CD4-positive, alpha-beta T cell (primary cell): ENCODE measurements at regions of chr14 and their contacts with region 1.

Region 1: GRCh38 chr14:104752735-104753531 is at the start of gene SIVA1:
- DNase-seq: peak; percentile 99 to 100 (median 99)
- ATAC-seq: peak; percentile 88
- H3K4me3 ChIP-seq: peak within 1 kb of the TSS; percentile 93
- H3K4me3 Mint-ChIP-seq: peak within 1 kb of the TSS; percentile 96
- H3K27ac ChIP-seq: peak within 1 kb of the TSS; percentile 60 to 83
- H3K27ac Mint-ChIP-seq: peak within 1 kb of the TSS; percentile 97
- H3K4me1 ChIP-seq: peaks cover 41% of the 10 kb centered on the region
- H3K4me1 Mint-ChIP-seq: peaks cover 37% of the 10 kb centered on the region
- H3K27me3 ChIP-seq: no peaks in the 10 kb centered on the region
- H3K27me3 Mint-ChIP-seq: no peaks in the 10 kb centered on the region
- CTCF ChIP-seq: no peak
- total RNA-seq, gene SIVA1: 111 to 124 TPM

Region 2: GRCh38 chr14:103715052-103716000 is 1037.6 kb before region 1 on chr14 and contains the starts of genes XRCC3 and ZFYVE21:
- CTCF ChIA-PET with region 1: no interaction called
- POLR2A ChIA-PET with region 1: no interaction called
- intact Hi-C with region 1: loop called in 1 of 2 experiments (anchors 10 kb)
- DNase-seq: peak; percentile 99 to 100 (median 99)
- ATAC-seq: peak; percentile 93
- H3K4me3 ChIP-seq: peak within 1 kb of the TSS; percentile 51
- H3K4me3 Mint-ChIP-seq: peak within 1 kb of the TSS; percentile 94
- H3K27ac ChIP-seq: no peak within 1 kb of the TSS
- H3K27ac Mint-ChIP-seq: peak within 1 kb of the TSS; percentile 84
- H3K4me1 ChIP-seq: peaks cover 39% of the 10 kb centered on the region
- H3K4me1 Mint-ChIP-seq: peaks cover 43% of the 10 kb centered on the region
- H3K27me3 ChIP-seq: no peaks in the 10 kb centered on the region
- H3K27me3 Mint-ChIP-seq: no peaks in the 10 kb centered on the region
- CTCF ChIP-seq: no peak
- total RNA-seq, gene XRCC3: 4.6 to 4.8 TPM
- total RNA-seq, gene ZFYVE21: 2.6 to 3.0 TPM

Region 3: GRCh38 chr14:104665657-104666522 is 87.0 kb before region 1 on chr14:
- CTCF ChIA-PET with region 1: no interaction called
- POLR2A ChIA-PET with region 1: interaction called, 10 read pairs
- intact Hi-C with region 1: no loop called
- DNase-seq: peak; percentile 28 to 78 (median 50)
- ATAC-seq: peak; percentile 93
- H3K4me3 ChIP-seq: no peak overlapping the region
- H3K4me3 Mint-ChIP-seq: peak overlapping the region; percentile 25
- H3K27ac ChIP-seq: no peak overlapping the region
- H3K27ac Mint-ChIP-seq: peak overlapping the region; percentile 63
- H3K4me1 ChIP-seq: peaks cover 30% of the 10 kb centered on the region
- H3K4me1 Mint-ChIP-seq: peaks cover 32% of the 10 kb centered on the region
- H3K27me3 ChIP-seq: no peaks in the 10 kb centered on the region
- H3K27me3 Mint-ChIP-seq: peaks cover 6% of the 10 kb centered on the region
- CTCF ChIP-seq: peak; percentile 69

Region 4: DNA sequence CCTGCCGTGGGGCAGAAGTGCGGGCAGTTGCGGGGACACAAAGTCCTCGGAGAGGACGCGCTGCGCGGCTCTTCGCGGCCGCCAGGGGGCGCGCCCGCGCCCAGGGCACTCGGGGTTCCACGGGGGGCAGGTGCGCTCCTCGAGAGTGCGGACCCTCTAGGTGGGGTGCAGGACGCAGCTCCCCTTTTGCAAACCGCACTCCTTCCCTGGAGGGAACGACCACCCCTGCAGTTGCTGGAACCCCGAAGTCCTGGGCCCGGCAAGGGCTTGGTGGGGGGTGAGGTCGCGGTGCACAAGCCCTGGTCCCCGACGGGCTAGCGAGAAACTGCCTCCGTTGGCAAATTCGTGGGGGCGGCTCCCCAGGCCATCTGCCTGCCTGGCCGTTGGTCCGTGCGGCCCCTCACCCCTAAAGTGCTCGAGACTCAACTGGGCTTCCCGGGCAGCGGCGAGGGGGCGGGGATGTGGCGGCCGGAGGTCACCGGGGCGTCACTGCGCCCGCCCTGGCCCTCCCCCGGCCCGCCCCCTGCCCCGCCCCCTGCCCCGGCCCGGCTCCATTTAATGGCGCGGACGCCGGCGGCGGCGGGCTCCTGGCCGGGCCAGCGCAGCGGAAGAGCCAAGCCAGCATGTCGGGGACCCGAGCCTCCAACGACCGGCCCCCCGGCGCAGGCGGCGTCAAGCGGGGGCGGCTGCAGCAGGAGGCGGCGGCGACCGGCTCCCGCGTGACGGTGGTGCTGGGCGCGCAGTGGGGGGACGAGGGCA is 29.1 kb before region 1 on chr14 and contains the start of gene ADSS1:
- CTCF ChIA-PET with region 1: no interaction called
- POLR2A ChIA-PET with region 1: interaction called, 8 read pairs
- intact Hi-C with region 1: loop called (anchors 1 kb)
- DNase-seq: peak; percentile 31 to 83 (median 52)
- ATAC-seq: peak; percentile 79
- H3K4me3 ChIP-seq: peak within 1 kb of the TSS; percentile 87
- H3K4me3 Mint-ChIP-seq: peak within 1 kb of the TSS; percentile 70
- H3K27ac ChIP-seq: no peak within 1 kb of the TSS
- H3K27ac Mint-ChIP-seq: no peak within 1 kb of the TSS
- H3K4me1 ChIP-seq: peaks cover 17% of the 10 kb centered on the region
- H3K4me1 Mint-ChIP-seq: no peaks in the 10 kb centered on the region
- H3K27me3 ChIP-seq: peaks cover 0 to 4% of the 10 kb centered on the region in 2 experiments
- H3K27me3 Mint-ChIP-seq: no peaks in the 10 kb centered on the region
- CTCF ChIP-seq: peak; percentile 96
- total RNA-seq, gene ADSS1: 2.0 to 2.7 TPM

Region 5: GRCh38 chr14:104800015-104800770 is 47.3 kb after region 1 on chr14:
- CTCF ChIA-PET with region 1: interaction called, 5 read pairs
- POLR2A ChIA-PET with region 1: interaction called, 30 read pairs
- intact Hi-C with region 1: loop called in 1 of 2 experiments (anchors 1 kb)
- DNase-seq: peak; percentile 59 to 94 (median 84)
- ATAC-seq: peak; percentile 63
- H3K4me3 ChIP-seq: peak overlapping the region; percentile 55
- H3K4me3 Mint-ChIP-seq: peak overlapping the region; percentile 79
- H3K27ac ChIP-seq: peak overlapping the region; percentile 50 to 82
- H3K27ac Mint-ChIP-seq: peak overlapping the region; percentile 71
- H3K4me1 ChIP-seq: peaks cover 55% of the 10 kb centered on the region
- H3K4me1 Mint-ChIP-seq: peaks cover 36% of the 10 kb centered on the region
- H3K27me3 ChIP-seq: no peaks in the 10 kb centered on the region
- H3K27me3 Mint-ChIP-seq: no peaks in the 10 kb centered on the region
- CTCF ChIP-seq: peak; percentile 10

Region 6: DNA sequence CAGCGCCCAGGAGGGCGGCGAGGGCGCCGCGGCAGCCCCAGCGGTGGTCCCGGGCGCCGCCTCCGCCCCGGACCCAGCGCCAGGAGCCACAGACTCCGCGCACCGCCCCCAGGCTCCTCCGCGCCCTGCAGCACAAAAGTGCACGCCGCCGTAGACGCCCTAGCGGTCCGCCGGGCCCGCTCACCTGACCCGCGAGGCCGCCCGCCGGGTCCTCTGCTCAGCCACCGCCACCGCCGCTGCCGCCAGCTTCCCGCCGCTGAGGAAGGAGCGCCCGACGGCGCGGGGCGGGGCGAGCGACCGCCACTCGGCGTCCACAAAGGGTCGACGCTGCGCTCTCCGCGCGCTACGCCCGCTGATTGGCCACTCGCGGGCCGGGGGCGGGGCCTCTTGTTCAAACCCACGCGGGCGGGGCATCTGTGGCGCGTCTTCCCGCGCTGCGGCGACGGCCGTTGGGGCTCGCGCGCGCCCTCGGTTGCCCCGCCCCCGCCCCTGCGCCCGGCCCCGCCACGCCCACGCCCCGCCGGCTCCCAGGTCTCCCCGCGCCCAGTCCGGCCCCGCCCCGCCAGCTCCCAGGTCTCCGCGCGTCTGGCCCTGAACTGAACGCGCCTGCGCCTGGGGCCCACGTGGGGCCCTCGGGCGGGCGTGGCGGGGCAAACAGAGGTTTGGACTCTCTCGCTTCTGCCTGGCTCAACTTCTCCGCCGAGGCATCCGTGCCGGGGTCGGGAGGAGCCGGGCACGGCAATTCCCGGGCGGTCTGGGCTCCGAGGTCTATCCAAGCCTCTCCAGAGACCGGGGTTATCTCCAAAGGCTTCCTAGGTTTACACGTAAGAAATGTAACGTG is 268.1 kb after region 1 on chr14 and contains the start of gene CDCA4:
- CTCF ChIA-PET with region 1: no interaction called
- POLR2A ChIA-PET with region 1: interaction called, 3 read pairs
- intact Hi-C with region 1: loop called in 1 of 2 experiments (anchors 5 kb)
- DNase-seq: peak; percentile 94 to 99 (median 98)
- ATAC-seq: peak; percentile 80
- H3K4me3 ChIP-seq: peak within 1 kb of the TSS; percentile 73
- H3K4me3 Mint-ChIP-seq: peak within 1 kb of the TSS; percentile 97
- H3K27ac ChIP-seq: peak within 1 kb of the TSS; percentile 71 to 73
- H3K27ac Mint-ChIP-seq: peak within 1 kb of the TSS; percentile 93
- H3K4me1 ChIP-seq: peaks cover 62% of the 10 kb centered on the region
- H3K4me1 Mint-ChIP-seq: peaks cover 62% of the 10 kb centered on the region
- H3K27me3 ChIP-seq: no peaks in the 10 kb centered on the region
- H3K27me3 Mint-ChIP-seq: no peaks in the 10 kb centered on the region
- CTCF ChIP-seq: no peak
- total RNA-seq, gene CDCA4: 17.7 to 18.8 TPM